ENCODE measurements at regions of chr12 and their contacts with region 1.

Region 1: GRCh38 chr12:100266835-100267618 is at the starts of genes DEPDC4 and SCYL2:
- DNase-seq: peak; percentile 88
- H3K4me3 Mint-ChIP-seq: peak within 1 kb of the TSS; percentile 99
- H3K27ac Mint-ChIP-seq: peak within 1 kb of the TSS; percentile 99
- H3K4me1 Mint-ChIP-seq: peaks cover 36% of the 10 kb centered on the region
- H3K27me3 Mint-ChIP-seq: no peaks in the 10 kb centered on the region
- total RNA-seq, gene DEPDC4: 1.1 and 2.1 TPM in 2 replicates
- total RNA-seq, gene SCYL2: 33.0 and 38.9 TPM in 2 replicates

Region 2: DNA sequence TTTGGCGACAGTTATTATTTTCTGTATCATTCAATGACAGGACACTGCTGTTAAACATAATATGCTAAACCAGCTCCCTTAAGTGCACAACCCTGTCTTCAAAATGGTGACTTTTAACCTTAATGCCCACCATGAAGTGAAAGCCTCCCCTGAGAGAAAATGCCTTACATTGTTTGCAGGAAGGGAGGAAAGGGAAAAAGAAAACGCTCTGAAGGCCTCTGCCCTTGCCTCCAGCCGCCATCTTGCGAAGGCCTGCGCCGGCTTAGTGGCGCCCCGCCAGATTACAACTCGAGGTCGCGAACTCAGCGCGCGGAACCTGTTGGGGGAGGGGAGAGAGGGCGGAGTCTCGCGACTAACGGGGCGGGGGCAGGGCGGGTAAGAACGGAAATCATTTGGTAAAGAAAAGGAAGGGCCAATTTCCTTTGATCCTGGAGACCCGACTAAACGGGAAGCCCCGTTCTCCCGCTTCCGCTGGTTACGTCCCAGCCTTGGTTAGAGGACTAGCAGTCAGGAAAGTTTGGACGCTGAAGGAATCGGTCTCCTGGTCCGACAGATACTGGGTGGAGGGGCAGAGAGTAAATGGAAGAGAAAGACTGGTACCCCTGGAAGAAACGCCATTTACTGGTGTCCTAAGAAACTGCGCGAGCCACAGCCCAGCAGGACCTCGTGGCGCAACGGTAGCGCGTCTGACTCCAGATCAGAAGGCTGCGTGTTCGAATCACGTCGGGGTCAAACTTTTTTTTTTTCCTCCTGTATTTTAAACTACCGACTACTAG is 1763.2 kb before region 1 on chr12:
- intact Hi-C with region 1: loop called (anchors 5 kb)
- DNase-seq: peak; percentile 90
- H3K4me3 Mint-ChIP-seq: peak overlapping the region; percentile 91
- H3K27ac Mint-ChIP-seq: peak overlapping the region; percentile 99
- H3K4me1 Mint-ChIP-seq: peaks cover 27% of the 10 kb centered on the region
- H3K27me3 Mint-ChIP-seq: peaks cover 8% of the 10 kb centered on the region

Region 3: GRCh38 chr12:98644711-98645402 is 1622.2 kb before region 1 on chr12 and contains the starts of genes APAF1 and IKBIP:
- intact Hi-C with region 1: loop called (anchors 5 kb)
- DNase-seq: peak; percentile 96
- H3K4me3 Mint-ChIP-seq: peak within 1 kb of the TSS; percentile 92
- H3K27ac Mint-ChIP-seq: peak within 1 kb of the TSS; percentile 95
- H3K4me1 Mint-ChIP-seq: peaks cover 49% of the 10 kb centered on the region
- H3K27me3 Mint-ChIP-seq: no peaks in the 10 kb centered on the region
- total RNA-seq, gene APAF1: 21.2 and 23.9 TPM in 2 replicates
- total RNA-seq, gene IKBIP: 35.5 and 36.5 TPM in 2 replicates

Region 4: DNA sequence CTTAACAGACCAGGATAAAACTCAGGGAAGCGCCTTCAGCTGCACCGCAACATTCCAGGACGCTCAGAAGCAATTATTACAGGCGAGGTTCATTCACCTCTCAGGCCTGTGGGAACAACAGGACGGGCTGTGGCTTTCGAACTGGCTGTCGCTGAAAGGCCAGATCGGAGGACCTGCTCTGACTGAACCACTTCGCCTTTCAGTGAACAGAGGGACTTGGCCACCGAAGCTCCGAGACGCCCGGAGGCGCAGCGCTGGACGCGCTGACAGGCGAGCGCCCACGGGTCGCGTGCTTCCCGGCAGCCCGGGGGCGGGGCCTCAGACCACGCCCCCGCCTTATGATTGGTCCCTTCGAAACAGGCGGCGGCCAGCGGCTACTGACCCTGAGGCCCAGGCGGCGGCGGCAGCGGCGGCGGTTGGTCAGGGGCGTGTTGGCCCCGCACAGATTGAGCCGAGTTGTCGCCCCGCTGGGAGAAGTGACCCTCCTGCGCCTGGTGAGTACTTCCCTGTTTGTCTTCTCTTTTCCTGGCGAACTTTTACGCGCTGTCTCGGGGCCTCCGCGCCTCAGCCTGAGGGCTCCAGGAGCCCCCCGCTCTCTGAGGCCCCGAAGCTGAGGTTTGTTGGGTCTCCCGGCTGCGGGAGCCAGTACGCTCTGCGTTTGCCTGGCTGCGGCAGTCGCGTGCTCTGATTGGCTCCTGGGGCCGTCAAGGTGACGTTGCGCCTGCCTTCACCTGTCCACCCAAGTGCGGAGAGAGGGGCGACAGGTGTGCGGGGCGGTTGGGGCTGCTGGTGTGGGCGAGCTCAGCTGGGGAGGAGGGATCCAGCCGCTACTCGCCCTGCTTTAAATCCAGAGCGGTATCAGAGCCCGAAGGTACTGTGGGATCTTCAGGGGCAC is 306.5 kb after region 1 on chr12 and contains the start of gene GAS2L3:
- intact Hi-C with region 1: loop called (anchors 1 kb)
- DNase-seq: peak; percentile 69
- H3K4me3 Mint-ChIP-seq: peak within 1 kb of the TSS; percentile 88
- H3K27ac Mint-ChIP-seq: no peak within 1 kb of the TSS
- H3K4me1 Mint-ChIP-seq: peaks cover 13% of the 10 kb centered on the region
- H3K27me3 Mint-ChIP-seq: peaks cover 19% of the 10 kb centered on the region
- total RNA-seq, gene GAS2L3: 0.86 and 1.0 TPM in 2 replicates

Region 5: GRCh38 chr12:101697197-101697929 is 1430.3 kb after region 1 on chr12 and contains the start of gene CHPT1:
- intact Hi-C with region 1: loop called (anchors 10 kb)
- DNase-seq: peak; percentile 34
- H3K4me3 Mint-ChIP-seq: peak within 1 kb of the TSS; percentile 88
- H3K27ac Mint-ChIP-seq: peak within 1 kb of the TSS; percentile 67
- H3K4me1 Mint-ChIP-seq: peaks cover 23% of the 10 kb centered on the region
- H3K27me3 Mint-ChIP-seq: peaks cover 33% of the 10 kb centered on the region
- total RNA-seq, gene CHPT1: 13.1 and 13.3 TPM in 2 replicates